Motor neuron (in vitro differentiated cells): ENCODE measurements at regions of chr1 and their contacts with region 1.

Region 1: DNA sequence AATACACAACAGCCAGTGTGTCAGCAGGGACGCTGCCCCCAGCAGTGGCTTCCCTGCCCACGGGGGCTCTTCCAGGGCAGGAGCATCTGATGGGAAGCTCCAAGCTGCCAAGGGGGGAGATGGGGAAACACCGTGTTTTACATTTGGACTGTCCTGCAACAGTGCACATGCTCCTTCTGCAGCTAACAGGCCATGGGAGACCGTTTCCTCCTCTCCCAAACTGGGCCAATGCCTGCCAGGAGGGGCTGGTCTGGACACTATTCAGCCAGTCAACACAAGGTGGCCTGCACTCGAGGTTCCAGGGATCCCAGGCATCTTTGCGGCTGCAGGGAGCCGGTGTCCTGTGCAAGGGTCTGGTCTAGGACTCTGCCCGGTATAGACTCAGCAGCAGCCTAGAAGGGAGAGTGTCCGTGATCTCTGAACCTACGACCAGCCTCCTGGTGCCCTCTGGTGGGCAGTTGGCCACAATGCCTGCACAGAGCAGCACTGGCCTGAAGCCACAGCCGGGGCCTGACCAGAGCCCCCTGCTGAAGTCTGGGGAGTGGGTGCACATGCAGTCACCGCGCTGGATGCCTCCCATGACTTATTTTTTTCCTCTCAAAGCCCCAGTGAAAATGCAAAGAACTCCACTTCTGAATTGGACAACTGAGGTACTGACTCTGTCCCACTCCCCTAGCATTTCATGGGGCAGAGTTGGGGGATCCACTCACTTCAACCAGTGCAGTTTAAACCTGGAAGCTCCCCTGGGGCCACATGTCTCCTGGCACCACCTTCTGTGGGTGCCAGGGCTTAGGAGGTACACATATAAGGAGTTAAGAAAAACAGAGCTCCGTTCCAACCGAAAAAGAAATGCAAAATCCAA is 33.3 kb downstream of the RCC2 start:
- ATAC-seq: peak; percentile 78 to 98 (median 95)
- H3K4me3 ChIP-seq: no peak overlapping the region
- H3K27ac ChIP-seq: no peak overlapping the region
- H3K4me1 ChIP-seq: peaks cover 0 to 5% of the 10 kb centered on the region in 2 donors

Region 2: DNA sequence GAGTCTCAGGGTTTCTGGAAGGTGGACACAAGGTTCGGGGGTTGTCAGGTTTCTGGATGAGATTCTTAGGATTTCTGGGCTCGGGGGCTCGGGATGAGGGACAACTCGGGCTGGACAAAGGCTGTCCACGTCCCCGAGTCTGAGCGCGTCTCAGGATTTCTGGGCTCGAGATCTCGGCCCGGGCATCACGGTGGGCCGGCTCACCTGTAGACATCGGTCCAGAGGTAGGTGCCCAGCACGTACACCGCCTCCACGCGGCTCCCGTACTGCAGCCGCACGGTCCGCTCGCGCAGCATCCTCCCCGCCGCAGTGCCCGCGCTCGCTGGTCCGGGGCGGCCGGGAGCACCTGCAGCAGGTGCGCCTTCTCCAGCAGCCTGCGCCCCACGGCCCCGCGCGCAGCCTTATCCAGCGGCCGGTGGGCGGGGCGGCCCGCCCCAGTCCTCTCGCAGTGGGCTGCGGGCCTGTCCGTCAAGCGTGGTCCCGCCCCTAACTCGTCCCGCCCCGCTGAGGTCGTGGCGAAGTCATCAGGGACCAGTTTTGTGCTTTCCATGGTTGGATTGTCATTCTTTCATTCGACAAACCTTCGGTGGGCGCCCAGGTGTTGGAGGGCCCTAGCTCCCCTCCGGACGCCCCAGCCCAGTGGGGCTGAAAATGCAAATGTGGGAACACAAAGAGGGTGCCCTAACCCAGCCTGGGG is 286.9 kb before region 1 on chr1 and contains the start of gene PADI2:
- in situ Hi-C with region 1: loop called in 3 of 9 experiments (anchors 10 to 25 kb)
- ATAC-seq: peak; percentile 87 to 99 (median 91)
- H3K4me3 ChIP-seq: peak within 1 kb of the TSS; percentile 27 to 48 (median 34)
- H3K27ac ChIP-seq: peak within 1 kb of the TSS in 1 of 2 donors; percentile 0
- H3K4me1 ChIP-seq: peaks cover 23 to 25% of the 10 kb centered on the region in 2 donors
- total RNA-seq, gene PADI2: 0.92 to 5.3 (median 2.0) TPM

Region 3: DNA sequence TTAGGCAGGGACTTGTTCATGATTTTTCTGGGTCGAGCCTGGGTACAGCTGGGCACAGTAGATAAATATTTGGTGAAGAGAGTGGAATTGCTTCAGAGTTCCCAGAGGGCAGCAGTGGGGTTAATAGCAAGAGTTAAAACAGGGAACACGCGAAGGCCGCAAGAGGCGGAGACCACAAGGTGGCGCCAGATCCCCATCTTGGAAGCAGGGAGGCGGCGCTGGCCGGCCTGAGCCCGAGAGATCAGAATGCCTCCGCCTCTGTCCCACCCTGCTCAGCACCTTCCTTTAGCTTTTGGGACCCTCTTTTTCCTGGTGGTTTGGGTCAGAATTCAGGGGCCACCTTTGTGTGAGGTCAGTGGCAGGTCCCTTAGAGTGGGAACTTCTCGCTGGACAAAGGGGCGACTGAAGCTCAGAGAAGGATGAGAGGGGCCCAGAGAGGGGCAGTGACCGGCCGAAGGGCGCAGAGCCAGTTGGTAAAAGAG is 280.3 kb before region 1 on chr1:
- in situ Hi-C with region 1: loop called in 3 of 9 experiments (anchors 10 to 25 kb)
- ATAC-seq: peak; percentile 69 to 97 (median 77)
- H3K4me3 ChIP-seq: no peak overlapping the region
- H3K27ac ChIP-seq: no peak overlapping the region
- H3K4me1 ChIP-seq: peaks cover 17 to 28% of the 10 kb centered on the region in 2 donors

Region 4: GRCh38 chr1:17606826-17607440 is 200.8 kb after region 1 on chr1:
- in situ Hi-C with region 1: loop called in 1 of 9 experiments (anchors 25 kb)
- ATAC-seq: peak in 3 of 8 experiments; percentile 46 to 80 (median 68)
- H3K4me3 ChIP-seq: no peak overlapping the region
- H3K27ac ChIP-seq: no peak overlapping the region
- H3K4me1 ChIP-seq: peaks cover 26 to 31% of the 10 kb centered on the region in 2 donors